ENCODE measurements at regions of chr10 and their contacts with region 1.

Region 1: GRCh38 chr10:74034301-74034700 is 36.4 kb downstream of the VCL start:
- DNase-seq: no peak
- H3K4me3 ChIP-seq: no peak overlapping the region
- H3K27ac ChIP-seq: peak overlapping the region; percentile 34 to 37
- H3K4me1 ChIP-seq: peaks cover 15 to 50% of the 10 kb centered on the region in 2 donors
- H3K27me3 ChIP-seq: no peaks in the 10 kb centered on the region
- CTCF ChIP-seq: no peak

Region 2: GRCh38 chr10:74071157-74071556 is 36.9 kb after region 1 on chr10:
- intact Hi-C with region 1: loop called (anchors 5 kb)
- DNase-seq: no peak
- H3K4me3 ChIP-seq: no peak overlapping the region
- H3K27ac ChIP-seq: peak overlapping the region in 1 of 2 donors; percentile 67
- H3K4me1 ChIP-seq: peaks cover 6 to 29% of the 10 kb centered on the region in 2 donors
- H3K27me3 ChIP-seq: no peaks in the 10 kb centered on the region
- CTCF ChIP-seq: no peak

Measured in ascending aorta (tissue), 2 donors.